CD4-positive, alpha-beta memory T cell (primary cell): ENCODE measurements at regions of chr5 and their contacts with region 1.

Region 1: GRCh38 chr5:170434966-170435605 is 45.9 kb upstream of the KCNMB1 start:
- DNase-seq: peak in 4 of 5 donors; percentile 35 to 48 (median 38)
- H3K4me3 ChIP-seq: no peak overlapping the region
- H3K4me3 Mint-ChIP-seq: no peak overlapping the region
- H3K27ac ChIP-seq: no peak overlapping the region
- H3K27ac Mint-ChIP-seq: no peak overlapping the region
- H3K4me1 ChIP-seq: no peaks in the 10 kb centered on the region
- H3K4me1 Mint-ChIP-seq: peaks cover 0 to 2% (median 0%) of the 10 kb centered on the region in 4 donors
- H3K27me3 ChIP-seq: no peaks in the 10 kb centered on the region
- H3K27me3 Mint-ChIP-seq: peaks cover 5 to 6% of the 10 kb centered on the region in 2 donors

Region 2: DNA sequence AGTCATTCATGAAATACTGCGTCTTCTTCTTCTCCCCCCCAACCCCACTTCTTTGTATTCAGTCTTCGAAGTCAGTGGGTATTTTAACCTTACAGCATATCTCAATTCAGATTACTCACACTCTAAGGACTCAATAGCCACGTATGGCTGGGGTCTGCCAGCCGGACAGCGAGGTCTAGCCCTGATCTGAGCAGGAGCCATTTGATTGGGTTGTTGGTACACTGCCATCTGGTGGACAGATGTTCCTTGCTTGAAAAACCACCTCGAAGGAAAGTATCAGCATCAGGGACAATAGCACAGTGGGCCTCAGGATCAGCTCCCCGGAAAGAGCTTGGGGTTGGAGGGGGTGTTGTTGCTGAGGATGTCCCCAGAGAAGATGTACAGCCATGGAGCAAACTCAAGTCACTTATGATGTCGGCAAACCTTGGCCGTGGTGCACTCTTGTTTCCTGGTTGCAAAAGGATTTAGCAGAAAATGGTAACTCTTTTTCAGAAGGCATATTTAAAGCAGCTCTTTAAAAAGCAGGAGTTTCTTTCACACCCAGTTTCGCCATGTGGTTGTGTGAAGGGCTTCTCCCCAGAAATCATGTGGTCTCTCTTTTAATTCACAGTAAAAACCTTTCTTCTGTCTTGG is 14.2 kb before region 1 on chr5:
- CTCF ChIA-PET with region 1: interaction called, 23 read pairs
- POLR2A ChIA-PET with region 1: interaction called, 3 read pairs
- intact Hi-C with region 1: no loop called
- DNase-seq: peak; percentile 45 to 54 (median 53)
- H3K4me3 ChIP-seq: no peak overlapping the region
- H3K4me3 Mint-ChIP-seq: no peak overlapping the region
- H3K27ac ChIP-seq: no peak overlapping the region
- H3K27ac Mint-ChIP-seq: peak overlapping the region in 1 of 7 donors; percentile 24
- H3K4me1 ChIP-seq: peaks cover 19% of the 10 kb centered on the region
- H3K4me1 Mint-ChIP-seq: peaks cover 18 to 25% (median 23%) of the 10 kb centered on the region in 4 donors
- H3K27me3 ChIP-seq: no peaks in the 10 kb centered on the region
- H3K27me3 Mint-ChIP-seq: peaks cover 4 to 7% of the 10 kb centered on the region in 2 donors

Region 3: GRCh38 chr5:170451747-170452365 is 16.8 kb after region 1 on chr5:
- CTCF ChIA-PET with region 1: interaction called, 13 read pairs
- POLR2A ChIA-PET with region 1: no interaction called
- intact Hi-C with region 1: no loop called
- DNase-seq: no peak
- H3K4me3 ChIP-seq: no peak overlapping the region
- H3K4me3 Mint-ChIP-seq: no peak overlapping the region
- H3K27ac ChIP-seq: no peak overlapping the region
- H3K27ac Mint-ChIP-seq: no peak overlapping the region
- H3K4me1 ChIP-seq: no peaks in the 10 kb centered on the region
- H3K4me1 Mint-ChIP-seq: no peaks in the 10 kb centered on the region
- H3K27me3 ChIP-seq: peaks cover 4% of the 10 kb centered on the region
- H3K27me3 Mint-ChIP-seq: peaks cover 4 to 11% of the 10 kb centered on the region in 2 donors

Region 4: GRCh38 chr5:170633235-170634081 is 198.4 kb after region 1 on chr5:
- CTCF ChIA-PET with region 1: interaction called, 44 read pairs
- POLR2A ChIA-PET with region 1: no interaction called
- intact Hi-C with region 1: no loop called
- DNase-seq: peak in 1 of 5 donors; percentile 38
- H3K4me3 ChIP-seq: peak overlapping the region in 1 of 2 donors; percentile 43
- H3K4me3 Mint-ChIP-seq: peak overlapping the region; percentile 72 to 93 (median 85)
- H3K27ac ChIP-seq: no peak overlapping the region
- H3K27ac Mint-ChIP-seq: peak overlapping the region in 6 of 7 donors; percentile 25 to 82 (median 76)
- H3K4me1 ChIP-seq: peaks cover 19% of the 10 kb centered on the region
- H3K4me1 Mint-ChIP-seq: peaks cover 15 to 37% (median 22%) of the 10 kb centered on the region in 4 donors
- H3K27me3 ChIP-seq: no peaks in the 10 kb centered on the region
- H3K27me3 Mint-ChIP-seq: peaks cover 5 to 7% of the 10 kb centered on the region in 2 donors

Region 5: GRCh38 chr5:171342362-171343111 is 907.5 kb after region 1 on chr5:
- CTCF ChIA-PET with region 1: interaction called, 3 read pairs
- POLR2A ChIA-PET with region 1: no interaction called
- intact Hi-C with region 1: loop called (anchors 10 kb)
- DNase-seq: peak in 3 of 5 donors; percentile 14 to 19 (median 16)
- H3K4me3 ChIP-seq: no peak overlapping the region
- H3K4me3 Mint-ChIP-seq: no peak overlapping the region
- H3K27ac ChIP-seq: no peak overlapping the region
- H3K27ac Mint-ChIP-seq: no peak overlapping the region
- H3K4me1 ChIP-seq: no peaks in the 10 kb centered on the region
- H3K4me1 Mint-ChIP-seq: peaks cover 0 to under 1% (median 0%) of the 10 kb centered on the region in 4 donors
- H3K27me3 ChIP-seq: peaks cover 3% of the 10 kb centered on the region
- H3K27me3 Mint-ChIP-seq: peaks cover 2 to 15% of the 10 kb centered on the region in 2 donors